CD4-positive, alpha-beta T cell (primary cell): ENCODE measurements at regions of chr10 and their contacts with region 1.

Region 1: GRCh38 chr10:11113156-11113555 is 95.5 kb downstream of the CELF2 start:
- DNase-seq: peak in 9 of 14 experiments; percentile 13 to 79 (median 26)
- ATAC-seq: peak; percentile 96
- H3K4me3 ChIP-seq: no peak overlapping the region
- H3K4me3 Mint-ChIP-seq: peak overlapping the region; percentile 52
- H3K27ac ChIP-seq: no peak overlapping the region
- H3K27ac Mint-ChIP-seq: peak overlapping the region; percentile 68
- H3K4me1 ChIP-seq: peaks cover 7% of the 10 kb centered on the region
- H3K4me1 Mint-ChIP-seq: peaks cover 49% of the 10 kb centered on the region
- H3K27me3 ChIP-seq: no peaks in the 10 kb centered on the region
- H3K27me3 Mint-ChIP-seq: no peaks in the 10 kb centered on the region
- CTCF ChIP-seq: peak; percentile 77

Region 2: GRCh38 chr10:11145495-11145855 is 32.3 kb after region 1 on chr10:
- CTCF ChIA-PET with region 1: interaction called, 13 read pairs
- POLR2A ChIA-PET with region 1: interaction called, 17 read pairs
- intact Hi-C with region 1: loop called (anchors 2 to 5 kb)
- DNase-seq: peak; percentile 47 to 89 (median 64)
- ATAC-seq: peak; percentile 63
- H3K4me3 ChIP-seq: peak overlapping the region; percentile 15
- H3K4me3 Mint-ChIP-seq: peak overlapping the region; percentile 73
- H3K27ac ChIP-seq: peak overlapping the region; percentile 89 to 91
- H3K27ac Mint-ChIP-seq: peak overlapping the region; percentile 97
- H3K4me1 ChIP-seq: peaks cover 94% of the 10 kb centered on the region
- H3K4me1 Mint-ChIP-seq: peaks cover 97% of the 10 kb centered on the region
- H3K27me3 ChIP-seq: no peaks in the 10 kb centered on the region
- H3K27me3 Mint-ChIP-seq: no peaks in the 10 kb centered on the region
- CTCF ChIP-seq: no peak

Region 3: DNA sequence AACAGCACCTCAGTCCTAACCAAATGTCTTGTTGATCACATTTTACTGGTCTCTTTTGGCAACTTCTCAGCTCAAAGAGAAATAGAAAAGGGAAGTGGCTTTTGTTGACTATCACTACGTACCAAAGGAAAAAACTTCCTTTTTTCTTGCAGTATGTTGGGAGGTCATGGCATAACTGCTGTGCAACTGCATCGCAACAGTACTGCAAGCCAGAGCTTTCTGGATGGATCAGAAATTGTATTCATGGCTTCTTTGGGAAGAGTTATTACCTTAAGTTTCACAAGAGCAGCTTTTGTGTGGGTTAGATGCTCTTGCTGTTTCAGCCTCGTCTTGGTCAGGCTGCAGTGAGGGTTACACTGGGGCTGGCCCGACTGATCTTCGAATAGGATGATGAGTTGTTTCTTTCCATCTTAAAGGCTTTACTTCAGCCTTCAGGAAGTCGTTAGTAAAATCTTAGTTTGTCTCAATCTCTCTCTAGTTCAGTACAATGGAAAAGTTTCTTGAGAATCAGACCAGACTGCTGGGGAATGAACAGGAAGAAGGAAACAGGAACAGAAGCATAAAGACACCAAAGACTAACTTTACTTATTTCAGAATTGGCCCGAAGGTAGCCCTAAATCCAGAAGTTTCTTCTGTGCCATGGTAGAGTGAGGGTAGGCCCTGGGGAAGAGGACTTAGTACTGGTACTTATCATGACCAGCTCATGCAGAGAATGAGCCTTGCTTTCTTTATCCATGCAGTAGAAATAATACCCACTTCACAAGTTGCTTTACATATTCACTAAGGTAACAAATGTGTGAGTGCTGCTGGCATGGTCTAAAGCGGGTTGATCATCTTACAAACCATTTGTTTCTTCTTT is 58.1 kb after region 1 on chr10:
- CTCF ChIA-PET with region 1: interaction called, 12 read pairs
- POLR2A ChIA-PET with region 1: interaction called, 96 read pairs
- intact Hi-C with region 1: loop called (anchors 1 to 2 kb)
- DNase-seq: peak in 2 of 14 experiments; percentile 45 to 64
- ATAC-seq: no peak
- H3K4me3 ChIP-seq: peak overlapping the region; percentile 87
- H3K4me3 Mint-ChIP-seq: no peak overlapping the region
- H3K27ac ChIP-seq: peak overlapping the region; percentile 84 to 96
- H3K27ac Mint-ChIP-seq: no peak overlapping the region
- H3K4me1 ChIP-seq: peaks cover 68% of the 10 kb centered on the region
- H3K4me1 Mint-ChIP-seq: peaks cover 2% of the 10 kb centered on the region
- H3K27me3 ChIP-seq: no peaks in the 10 kb centered on the region
- H3K27me3 Mint-ChIP-seq: no peaks in the 10 kb centered on the region
- CTCF ChIP-seq: no peak

Region 4: DNA sequence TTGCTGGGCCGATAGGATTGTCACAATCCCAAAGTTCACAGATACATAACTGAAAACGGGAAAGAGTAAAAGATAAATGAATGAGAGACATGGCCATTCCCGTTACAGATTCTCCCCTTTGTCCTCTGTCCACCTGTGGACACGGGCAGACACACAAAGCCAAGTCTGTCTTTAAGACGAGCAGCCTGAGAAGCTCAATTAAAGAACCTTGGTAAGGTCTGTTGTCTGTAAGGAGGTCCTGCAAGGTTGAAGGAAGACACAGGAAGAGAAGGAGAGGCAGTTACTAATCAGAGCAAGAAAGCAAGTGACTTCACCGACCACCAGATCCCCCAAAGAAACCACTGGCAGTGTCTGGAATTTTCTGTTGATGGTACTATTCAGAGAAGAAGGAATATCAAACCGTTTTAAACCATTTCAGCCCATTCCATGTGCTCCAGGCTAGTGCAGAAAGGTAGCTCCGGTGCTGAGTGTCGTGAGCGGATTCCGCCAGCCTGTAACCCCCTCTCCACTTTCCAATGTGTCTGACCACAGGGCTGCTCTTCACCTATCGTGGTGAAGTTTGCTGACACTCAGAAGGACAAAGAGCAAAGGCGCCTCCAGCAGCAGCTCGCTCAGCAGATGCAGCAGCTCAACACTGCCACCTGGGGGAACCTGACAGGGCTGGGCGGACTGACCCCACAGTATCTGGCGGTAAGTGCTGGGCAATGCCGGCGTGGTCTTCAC is 157.1 kb after region 1 on chr10:
- CTCF ChIA-PET with region 1: interaction called, 5 read pairs
- POLR2A ChIA-PET with region 1: interaction called, 4 read pairs
- intact Hi-C with region 1: loop called (anchors 1 kb)
- DNase-seq: peak; percentile 56 to 82 (median 66)
- ATAC-seq: peak; percentile 75
- H3K4me3 ChIP-seq: no peak overlapping the region
- H3K4me3 Mint-ChIP-seq: peak overlapping the region; percentile 35
- H3K27ac ChIP-seq: peak overlapping the region in 1 of 2 donors; percentile 29
- H3K27ac Mint-ChIP-seq: peak overlapping the region; percentile 93
- H3K4me1 ChIP-seq: peaks cover 19% of the 10 kb centered on the region
- H3K4me1 Mint-ChIP-seq: peaks cover 78% of the 10 kb centered on the region
- H3K27me3 ChIP-seq: no peaks in the 10 kb centered on the region
- H3K27me3 Mint-ChIP-seq: no peaks in the 10 kb centered on the region
- CTCF ChIP-seq: peak; percentile 79

Region 5: DNA sequence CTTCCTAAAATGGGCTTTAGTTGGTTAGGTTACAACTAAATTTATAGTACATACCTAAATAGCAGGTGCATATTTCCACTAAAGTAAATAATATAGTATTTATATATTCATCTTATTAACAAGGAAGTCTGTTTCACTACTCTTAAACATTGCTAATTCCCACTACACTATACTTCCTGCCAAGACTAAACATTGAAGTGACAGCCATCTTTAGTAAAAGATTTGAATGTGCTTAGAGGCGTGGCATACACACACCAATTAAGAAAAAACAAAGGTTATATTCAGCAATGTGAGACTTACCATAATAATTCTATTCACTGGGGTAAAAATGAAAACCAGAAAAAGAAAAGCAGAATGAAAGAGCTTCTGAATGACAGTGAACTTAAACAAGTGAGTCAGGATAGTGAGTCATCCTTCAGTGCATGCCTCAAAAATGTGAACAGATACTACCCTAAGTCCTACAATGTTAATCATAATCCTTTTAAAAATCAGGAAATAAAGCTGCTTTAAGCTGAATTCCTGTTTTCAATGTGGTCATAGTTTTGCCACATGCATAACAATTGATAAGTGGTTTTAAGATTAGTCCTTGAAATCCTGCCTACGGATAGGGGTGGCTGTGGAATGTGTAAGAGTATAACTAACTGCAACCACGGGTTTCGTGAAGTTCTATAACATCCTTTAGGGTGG is 438.9 kb after region 1 on chr10:
- CTCF ChIA-PET with region 1: no interaction called
- POLR2A ChIA-PET with region 1: no interaction called
- intact Hi-C with region 1: no loop called
- DNase-seq: peak in 2 of 14 experiments; percentile 46 to 54
- ATAC-seq: no peak
- H3K4me3 ChIP-seq: no peak overlapping the region
- H3K4me3 Mint-ChIP-seq: no peak overlapping the region
- H3K27ac ChIP-seq: no peak overlapping the region
- H3K27ac Mint-ChIP-seq: no peak overlapping the region
- H3K4me1 ChIP-seq: no peaks in the 10 kb centered on the region
- H3K4me1 Mint-ChIP-seq: peaks cover 9% of the 10 kb centered on the region
- H3K27me3 ChIP-seq: no peaks in the 10 kb centered on the region
- H3K27me3 Mint-ChIP-seq: no peaks in the 10 kb centered on the region
- CTCF ChIP-seq: no peak